Lower leg skin (tissue), 4 donors: ENCODE measurements at regions of chr17 and their contacts with region 1.

Region 1: DNA sequence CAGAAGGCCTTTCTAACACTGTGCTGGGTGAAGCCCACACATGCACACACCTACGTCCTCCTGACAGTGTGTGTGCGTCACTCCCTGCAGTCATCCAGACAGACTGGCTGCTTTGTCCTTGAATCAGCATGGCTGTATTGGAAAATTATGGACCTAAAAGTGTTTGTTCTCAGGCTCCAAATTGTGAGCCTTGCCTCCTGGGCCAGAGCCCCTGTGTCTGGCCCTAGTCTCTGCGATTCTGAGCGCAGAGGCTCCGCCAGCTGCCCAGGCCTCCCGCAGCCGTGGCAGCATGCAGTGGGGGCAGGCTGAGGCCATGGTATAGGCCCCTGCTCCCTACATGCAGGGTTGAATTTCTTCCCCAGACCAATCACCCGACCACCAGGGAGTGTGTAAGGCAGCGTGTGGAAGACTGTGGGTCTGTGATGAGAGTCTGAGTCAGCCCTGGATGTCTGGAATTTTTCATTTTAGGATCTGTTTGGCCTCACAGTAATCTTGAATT is 166.9 kb downstream of the LGALS9B start:
- DNase-seq: no peak
- H3K4me3 ChIP-seq: no peak overlapping the region
- CTCF ChIP-seq: no peak
- POLR2A ChIP-seq: no peak

Region 2: DNA sequence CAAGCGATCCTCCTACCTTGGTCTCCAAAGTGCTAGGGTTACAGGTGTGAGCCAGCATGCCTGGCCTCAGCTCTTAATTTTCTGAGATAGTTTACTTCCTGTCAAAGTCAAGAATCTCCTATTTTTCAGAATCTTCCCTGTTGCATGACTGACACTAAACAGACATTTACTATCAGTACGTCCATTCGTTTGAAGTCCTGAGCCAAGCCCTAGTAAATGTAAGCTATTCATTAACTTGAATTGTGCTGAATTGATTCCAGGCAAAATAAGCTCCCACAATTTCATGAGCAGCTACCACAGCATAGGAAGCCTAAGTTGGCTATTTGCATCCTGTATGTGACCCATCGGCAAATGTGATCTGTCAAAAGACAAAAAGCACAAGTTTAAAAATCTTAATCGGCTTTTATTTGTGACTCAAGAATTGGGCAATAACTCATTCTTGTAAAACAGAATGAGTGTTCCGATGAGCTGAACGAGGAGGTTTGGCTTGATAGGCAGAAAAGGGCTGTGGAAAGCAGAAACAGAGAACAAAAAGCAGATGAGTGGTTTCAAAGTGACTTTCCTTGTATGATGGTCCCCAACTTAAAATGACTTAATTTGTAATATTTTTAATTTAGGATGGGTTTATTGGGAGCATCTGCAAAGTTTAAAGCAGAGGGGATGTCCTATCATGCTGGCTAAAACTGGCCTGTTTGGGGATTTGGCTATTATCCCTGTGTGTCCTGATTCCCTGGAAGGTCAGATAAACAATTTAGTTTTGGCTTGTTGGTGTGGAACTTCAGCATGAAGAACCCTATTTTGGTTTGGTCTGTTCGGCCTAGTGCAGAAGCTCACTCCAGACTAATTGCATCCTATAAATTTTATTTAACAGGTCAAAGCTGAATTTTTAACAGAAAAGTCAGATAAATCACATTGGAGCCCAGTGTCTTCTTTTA is 875.3 kb before region 1 on chr17:
- intact Hi-C with region 1: no loop called
- DNase-seq: no peak
- H3K4me3 ChIP-seq: no peak overlapping the region
- CTCF ChIP-seq: no peak
- POLR2A ChIP-seq: no peak

Region 3: GRCh38 chr17:19940722-19941464 is 359.6 kb before region 1 on chr17:
- intact Hi-C with region 1: no loop called
- DNase-seq: no peak
- H3K4me3 ChIP-seq: no peak overlapping the region
- CTCF ChIP-seq: no peak
- POLR2A ChIP-seq: no peak

Region 4: GRCh38 chr17:20234276-20234675 is 66.2 kb before region 1 on chr17:
- intact Hi-C with region 1: loop called (anchors 10 kb)
- DNase-seq: no peak
- H3K4me3 ChIP-seq: no peak overlapping the region
- CTCF ChIP-seq: no peak
- POLR2A ChIP-seq: no peak

Region 5: DNA sequence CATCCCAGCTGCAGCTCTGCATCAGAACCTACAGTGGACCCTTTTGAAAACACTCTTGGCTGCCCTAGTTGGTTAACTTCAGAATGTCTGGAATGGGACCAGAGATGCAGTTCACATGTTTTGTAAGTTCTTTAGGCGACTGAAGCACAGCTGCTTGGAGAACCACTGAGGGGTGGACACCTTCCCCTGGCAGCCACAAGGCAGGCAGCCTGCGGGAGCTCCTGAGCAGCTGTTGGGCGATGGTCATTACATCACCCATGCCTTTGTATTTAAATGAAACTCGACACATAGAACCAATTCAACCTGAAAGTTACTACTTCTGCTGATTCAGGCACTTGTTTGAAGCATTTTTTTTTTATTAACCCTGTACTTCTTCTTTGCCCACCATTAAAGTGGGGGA is 15.3 kb after region 1 on chr17:
- intact Hi-C with region 1: no loop called
- DNase-seq: no peak
- H3K4me3 ChIP-seq: no peak overlapping the region
- CTCF ChIP-seq: no peak
- POLR2A ChIP-seq: no peak

Region 6: GRCh38 chr17:20774472-20775135 is 474.1 kb after region 1 on chr17:
- intact Hi-C with region 1: no loop called
- DNase-seq: no peak
- H3K4me3 ChIP-seq: no peak overlapping the region
- CTCF ChIP-seq: no peak
- POLR2A ChIP-seq: no peak